Aorta (tissue), 5 donors: ENCODE measurements at regions of chr10 and their contacts with region 1.

Region 1: DNA sequence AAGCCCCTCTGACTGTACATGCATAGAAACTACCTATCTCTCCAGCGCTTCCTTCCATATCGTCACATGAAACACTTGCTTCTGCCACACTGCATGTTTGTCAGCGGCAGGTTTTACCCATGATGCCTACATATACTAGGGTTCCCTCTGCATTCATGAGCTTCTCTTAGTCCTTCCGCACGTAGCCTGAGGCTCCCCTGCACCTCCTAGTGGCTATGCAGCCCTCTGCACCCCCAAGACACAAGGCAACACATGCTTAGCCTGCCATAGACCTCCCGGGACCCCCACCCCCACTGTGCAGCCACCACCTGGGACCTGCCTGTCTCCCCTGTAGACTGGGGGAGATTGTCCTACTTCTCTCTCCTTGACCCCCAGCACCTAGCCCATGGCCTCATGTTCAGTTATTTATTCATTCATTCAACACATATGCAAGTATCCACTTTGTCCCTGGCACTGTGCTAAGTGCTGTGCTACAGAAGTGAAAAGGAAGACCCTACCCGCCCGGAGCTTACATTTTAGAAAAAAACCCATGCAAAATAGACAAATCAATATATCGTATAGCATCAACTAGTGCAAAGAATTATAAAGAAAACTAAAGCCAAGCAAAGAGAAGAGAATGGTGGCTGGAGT is 23.5 kb downstream of the TMEM273 start:
- DNase-seq: no peak
- ATAC-seq: no peak
- H3K4me3 ChIP-seq: no peak overlapping the region
- H3K27ac ChIP-seq: no peak overlapping the region
- H3K4me1 ChIP-seq: no peaks in the 10 kb centered on the region
- H3K27me3 ChIP-seq: no peaks in the 10 kb centered on the region

Region 2: DNA sequence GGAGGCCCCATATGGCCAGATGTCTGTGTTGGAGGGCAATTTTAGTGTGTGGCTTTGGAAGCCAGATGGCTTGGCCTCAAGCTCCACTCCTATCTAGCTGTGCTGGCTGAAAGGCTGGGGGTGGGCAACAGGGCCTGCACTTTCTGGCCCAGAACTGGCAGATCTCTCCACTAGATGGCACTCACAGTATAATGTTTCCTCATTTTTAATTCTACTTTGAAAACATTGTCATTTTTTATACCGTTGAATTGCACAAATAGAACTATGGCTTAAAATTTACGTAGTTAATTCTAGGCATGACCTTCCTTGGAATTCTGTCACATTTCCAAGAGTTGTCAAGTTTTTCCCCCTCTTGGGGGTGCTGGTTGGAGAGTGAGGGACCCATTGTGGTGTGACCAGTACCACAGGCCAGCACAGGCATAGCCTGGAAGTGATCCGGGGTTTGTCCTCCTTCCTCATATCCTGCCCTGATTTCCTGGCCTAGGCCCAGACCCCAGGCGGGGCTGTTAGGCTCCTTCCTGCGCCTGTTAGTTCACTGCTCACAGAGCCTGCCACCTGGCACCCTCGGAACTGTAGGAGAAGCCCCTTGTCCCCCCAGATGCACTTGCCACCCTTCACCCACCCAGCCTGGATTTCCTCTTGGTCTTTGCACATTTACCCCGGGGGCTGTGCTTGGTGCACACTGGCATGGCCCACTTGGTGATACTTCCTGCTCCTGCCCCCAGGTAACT is 612.6 kb before region 1 on chr10:
- intact Hi-C with region 1: loop called in 1 of 2 experiments (anchors 10 kb)
- DNase-seq: peak in 1 of 2 donors; percentile 58
- ATAC-seq: no peak
- H3K4me3 ChIP-seq: no peak overlapping the region
- H3K27ac ChIP-seq: no peak overlapping the region
- H3K4me1 ChIP-seq: no peaks in the 10 kb centered on the region
- H3K27me3 ChIP-seq: no peaks in the 10 kb centered on the region

Region 3: GRCh38 chr10:48907730-48908129 is 256.9 kb before region 1 on chr10:
- intact Hi-C with region 1: no loop called
- DNase-seq: no peak
- ATAC-seq: no peak
- H3K4me3 ChIP-seq: no peak overlapping the region
- H3K27ac ChIP-seq: no peak overlapping the region
- H3K4me1 ChIP-seq: no peaks in the 10 kb centered on the region
- H3K27me3 ChIP-seq: no peaks in the 10 kb centered on the region

Region 4: GRCh38 chr10:48981310-48981907 is 183.3 kb before region 1 on chr10:
- intact Hi-C with region 1: loop called (anchors 1 to 2 kb)
- DNase-seq: peak; percentile 66 to 84
- ATAC-seq: peak; percentile 75
- H3K4me3 ChIP-seq: no peak overlapping the region
- H3K27ac ChIP-seq: no peak overlapping the region
- H3K4me1 ChIP-seq: no peaks in the 10 kb centered on the region
- H3K27me3 ChIP-seq: no peaks in the 10 kb centered on the region

Region 5: GRCh38 chr10:49194212-49194920 is 29.7 kb after region 1 on chr10:
- intact Hi-C with region 1: no loop called
- DNase-seq: no peak
- ATAC-seq: no peak
- H3K4me3 ChIP-seq: no peak overlapping the region
- H3K27ac ChIP-seq: no peak overlapping the region
- H3K4me1 ChIP-seq: no peaks in the 10 kb centered on the region
- H3K27me3 ChIP-seq: no peaks in the 10 kb centered on the region

Region 6: GRCh38 chr10:50152792-50153272 is 988.2 kb after region 1 on chr10:
- intact Hi-C with region 1: no loop called
- DNase-seq: no peak
- ATAC-seq: no peak
- H3K4me3 ChIP-seq: no peak overlapping the region
- H3K27ac ChIP-seq: no peak overlapping the region
- H3K4me1 ChIP-seq: no peaks in the 10 kb centered on the region
- H3K27me3 ChIP-seq: no peaks in the 10 kb centered on the region